Activated T-helper 1 cell treated with anti-CD3 and anti-CD28 coated beads, Interleukin-12 subunit alpha, Interleukin-12 subunit beta, Interleukin-2, Interleukin-4 antibody, amounts not matched to agents 30 ng/mL and 10 ng/mL and 1 ng/mL, durations not matched to agents 14 hours and 24 hours and 36 hours (primary cell): ENCODE measurements at regions of chr6 and their contacts with region 1.

Region 1: DNA sequence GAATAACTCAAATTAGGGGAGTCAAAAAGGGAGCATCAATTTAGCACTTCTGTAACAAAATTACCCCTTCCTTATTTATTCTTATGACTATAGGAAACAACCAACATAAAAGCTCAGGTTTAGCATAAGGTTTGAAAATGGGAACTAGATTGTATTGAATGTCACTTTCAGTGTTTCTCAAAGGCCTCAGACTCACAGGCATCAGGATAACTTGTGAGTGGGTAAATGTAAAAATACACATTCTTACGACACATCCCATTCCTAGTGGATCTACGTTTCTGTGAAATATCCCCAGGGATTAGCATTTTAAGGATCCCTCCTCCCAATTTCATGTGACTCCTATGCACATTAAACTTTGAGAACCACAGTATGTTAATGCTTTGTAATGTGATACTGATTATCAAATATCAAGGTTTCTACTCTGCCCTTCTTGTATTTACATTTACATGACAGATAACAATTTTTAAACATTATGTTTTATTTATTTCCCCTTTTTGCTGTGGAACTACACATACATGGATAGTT is 114.8 kb downstream of the HS3ST5 start:
- DNase-seq: no peak
- H3K4me3 Mint-ChIP-seq: no peak overlapping the region
- H3K27ac Mint-ChIP-seq: no peak overlapping the region
- H3K4me1 Mint-ChIP-seq: no peaks in the 10 kb centered on the region
- H3K27me3 Mint-ChIP-seq: no peaks in the 10 kb centered on the region

Region 2: DNA sequence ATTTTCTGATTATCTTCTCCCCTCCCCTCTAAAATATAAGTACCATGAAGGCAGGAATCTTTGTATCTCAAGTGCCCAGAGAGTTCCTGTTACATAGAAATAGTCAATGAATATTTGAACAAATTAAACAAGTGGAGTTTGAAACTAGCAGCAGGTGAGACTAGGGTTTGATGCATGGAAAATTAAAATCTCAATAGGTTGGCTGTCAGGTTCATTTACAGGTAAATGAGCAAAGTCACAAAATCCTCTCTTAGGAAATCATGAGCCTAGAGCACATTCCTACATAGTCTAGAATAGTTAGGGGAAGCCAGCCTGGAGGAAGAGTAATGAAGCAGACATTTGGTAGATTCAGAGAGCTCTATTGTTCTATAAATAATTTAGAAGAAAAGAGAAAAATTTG is 25.6 kb before region 1 on chr6:
- intact Hi-C with region 1: loop called (anchors 1 kb)
- DNase-seq: no peak
- H3K4me3 Mint-ChIP-seq: no peak overlapping the region
- H3K27ac Mint-ChIP-seq: no peak overlapping the region
- H3K4me1 Mint-ChIP-seq: no peaks in the 10 kb centered on the region
- H3K27me3 Mint-ChIP-seq: peaks cover 4% of the 10 kb centered on the region